ENCODE measurements at regions of chr2 and their contacts with region 1.

Region 1: GRCh38 chr2:69724540-69725159 is 17.3 kb upstream of the ANXA4 start:
- DNase-seq: no peak
- H3K4me3 ChIP-seq: peak overlapping the region; percentile 47
- CTCF ChIP-seq: peak; percentile 79

Region 2: GRCh38 chr2:69559442-69560146 is 165.1 kb before region 1 on chr2:
- CTCF ChIA-PET with region 1: interaction called, 16 read pairs
- POLR2A ChIA-PET with region 1: no interaction called
- DNase-seq: no peak
- H3K4me3 ChIP-seq: no peak overlapping the region
- CTCF ChIP-seq: peak; percentile 50

Region 3: GRCh38 chr2:69741619-69742466 is 17.2 kb after region 1 on chr2 and contains the start of gene ANXA4:
- CTCF ChIA-PET with region 1: interaction called, 97 read pairs
- POLR2A ChIA-PET with region 1: interaction called, 4 read pairs
- DNase-seq: no peak
- H3K4me3 ChIP-seq: peak within 1 kb of the TSS; percentile 74
- CTCF ChIP-seq: no peak

Region 4: DNA sequence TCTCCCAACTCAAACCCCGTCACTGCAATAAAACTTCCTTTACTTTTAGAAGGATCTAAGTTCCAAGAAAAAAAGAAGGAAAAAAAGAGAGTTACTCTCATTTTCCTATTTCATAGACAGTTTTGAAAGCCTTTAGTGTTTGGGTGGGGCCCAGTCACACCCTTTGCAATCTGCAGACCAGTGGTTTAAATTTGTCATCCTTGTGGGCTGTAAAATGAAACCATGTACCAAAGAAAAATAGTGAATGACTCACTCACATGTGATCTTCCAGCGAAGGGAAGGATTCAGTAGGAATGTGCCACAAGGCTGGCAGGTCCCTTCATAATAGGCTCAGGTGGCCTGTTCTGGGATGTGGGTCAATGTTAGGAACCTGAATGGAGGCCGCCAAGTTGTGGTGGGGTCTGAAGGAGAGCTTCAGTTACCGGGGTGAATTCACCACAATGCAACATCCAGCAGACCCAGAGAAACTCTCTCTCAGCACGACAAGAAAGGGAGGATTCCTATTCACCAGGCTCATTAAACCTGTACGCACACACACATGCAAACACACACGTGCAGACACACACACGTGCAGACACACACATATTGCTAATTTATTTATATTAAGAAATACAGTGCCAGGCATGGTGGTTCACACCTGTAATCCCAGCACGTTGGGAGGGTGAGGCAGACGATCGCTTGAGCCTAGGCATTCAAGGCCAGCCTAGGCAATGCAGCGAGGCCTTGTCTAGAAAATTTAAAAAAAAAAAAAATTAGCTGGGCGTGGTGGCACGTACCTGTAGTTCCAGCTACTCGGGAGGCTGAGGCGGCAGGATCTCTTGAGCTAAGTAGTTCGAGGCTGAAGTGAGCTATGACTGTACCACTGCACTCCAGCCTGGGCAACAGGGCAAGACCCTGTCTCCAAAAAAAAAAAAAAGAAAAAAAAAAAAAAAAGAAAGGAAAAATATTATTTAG is 45.8 kb after region 1 on chr2:
- CTCF ChIA-PET with region 1: interaction called, 11 read pairs
- POLR2A ChIA-PET with region 1: no interaction called
- DNase-seq: no peak
- H3K4me3 ChIP-seq: no peak overlapping the region
- CTCF ChIP-seq: no peak

Region 5: DNA sequence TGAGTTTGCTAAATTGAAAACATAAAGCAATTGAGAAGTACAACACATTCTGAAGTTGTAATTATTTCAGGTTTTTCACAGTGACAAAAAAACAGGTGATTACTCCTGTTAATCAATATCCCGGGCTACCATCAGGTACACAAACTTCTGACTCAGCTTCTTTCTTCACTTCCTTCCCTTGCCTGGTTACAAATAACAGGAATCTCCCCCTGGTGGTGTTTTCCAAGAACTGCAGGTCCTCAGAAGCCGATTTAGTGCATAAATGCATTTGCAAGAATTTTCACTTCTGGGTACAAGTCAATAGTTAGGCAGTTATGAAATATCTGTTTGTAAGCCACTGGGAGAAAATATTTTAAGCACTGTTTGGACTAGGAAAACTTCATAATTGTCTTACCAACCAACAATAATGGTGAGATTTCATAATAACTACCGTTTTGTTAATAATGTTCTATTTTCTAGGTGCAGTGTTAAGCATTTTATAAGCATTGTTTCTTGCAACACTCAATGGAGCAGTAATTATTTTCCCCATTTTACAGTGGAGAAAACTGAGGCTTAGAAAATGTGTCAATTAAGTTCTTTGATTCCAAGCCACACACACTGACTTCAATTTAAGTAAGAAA is 92.4 kb after region 1 on chr2:
- CTCF ChIA-PET with region 1: interaction called, 788 read pairs
- POLR2A ChIA-PET with region 1: interaction called, 12 read pairs
- DNase-seq: peak; percentile 41
- H3K4me3 ChIP-seq: no peak overlapping the region
- CTCF ChIP-seq: peak; percentile 61

Region 6: GRCh38 chr2:69914170-69914960 is 189.7 kb after region 1 on chr2:
- CTCF ChIA-PET with region 1: interaction called, 14 read pairs
- POLR2A ChIA-PET with region 1: no interaction called
- DNase-seq: peak; percentile 100
- H3K4me3 ChIP-seq: peak overlapping the region; percentile 74
- CTCF ChIP-seq: peak; percentile 46

Region 7: GRCh38 chr2:70321370-70321769 is 596.7 kb after region 1 on chr2:
- CTCF ChIA-PET with region 1: no interaction called
- POLR2A ChIA-PET with region 1: no interaction called
- DNase-seq: no peak
- H3K4me3 ChIP-seq: no peak overlapping the region
- CTCF ChIP-seq: no peak